Activated CD8-positive, alpha-beta T cell treated with anti-CD3 and anti-CD28 coated beads, Interleukin-2, amount 10 ng/mL, durations not matched to agents 7 days and 5 days (primary cell): ENCODE measurements at regions of chr2 and their contacts with region 1.

Region 1: DNA sequence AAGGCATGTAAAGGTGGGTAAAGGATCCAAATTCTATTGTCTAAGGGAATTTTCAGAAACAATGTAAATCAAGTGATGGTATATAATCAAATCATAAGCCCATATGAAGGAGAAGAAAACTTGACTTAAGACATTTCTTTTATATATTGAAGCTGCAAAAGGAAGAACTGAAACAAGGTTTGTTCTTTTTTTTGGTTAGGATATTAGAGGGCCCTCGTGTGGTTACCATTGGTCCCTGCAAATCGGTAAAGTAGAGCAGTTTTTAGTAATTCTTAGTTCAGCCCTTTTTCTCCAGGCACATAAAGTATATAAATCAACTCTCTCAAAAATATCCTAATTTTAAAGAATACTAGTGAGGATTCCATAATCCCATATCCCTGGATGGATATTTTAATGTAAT is 105.6 kb upstream of the STK17B start:
- DNase-seq: peak; percentile 61
- ATAC-seq: no peak
- H3K4me3 Mint-ChIP-seq: peak overlapping the region; percentile 31
- H3K27ac Mint-ChIP-seq: peak overlapping the region; percentile 89
- H3K4me1 Mint-ChIP-seq: peaks cover 48% of the 10 kb centered on the region
- H3K27me3 Mint-ChIP-seq: no peaks in the 10 kb centered on the region

Region 2: GRCh38 chr2:196143730-196144131 is 133.3 kb before region 1 on chr2:
- CTCF ChIA-PET with region 1: interaction called, 10 read pairs
- POLR2A ChIA-PET with region 1: interaction called, 4 read pairs
- DNase-seq: no peak
- ATAC-seq: peak; percentile 17
- H3K4me3 Mint-ChIP-seq: peak overlapping the region; percentile 28
- H3K27ac Mint-ChIP-seq: peak overlapping the region; percentile 72
- H3K4me1 Mint-ChIP-seq: peaks cover 74% of the 10 kb centered on the region
- H3K27me3 Mint-ChIP-seq: no peaks in the 10 kb centered on the region

Region 3: DNA sequence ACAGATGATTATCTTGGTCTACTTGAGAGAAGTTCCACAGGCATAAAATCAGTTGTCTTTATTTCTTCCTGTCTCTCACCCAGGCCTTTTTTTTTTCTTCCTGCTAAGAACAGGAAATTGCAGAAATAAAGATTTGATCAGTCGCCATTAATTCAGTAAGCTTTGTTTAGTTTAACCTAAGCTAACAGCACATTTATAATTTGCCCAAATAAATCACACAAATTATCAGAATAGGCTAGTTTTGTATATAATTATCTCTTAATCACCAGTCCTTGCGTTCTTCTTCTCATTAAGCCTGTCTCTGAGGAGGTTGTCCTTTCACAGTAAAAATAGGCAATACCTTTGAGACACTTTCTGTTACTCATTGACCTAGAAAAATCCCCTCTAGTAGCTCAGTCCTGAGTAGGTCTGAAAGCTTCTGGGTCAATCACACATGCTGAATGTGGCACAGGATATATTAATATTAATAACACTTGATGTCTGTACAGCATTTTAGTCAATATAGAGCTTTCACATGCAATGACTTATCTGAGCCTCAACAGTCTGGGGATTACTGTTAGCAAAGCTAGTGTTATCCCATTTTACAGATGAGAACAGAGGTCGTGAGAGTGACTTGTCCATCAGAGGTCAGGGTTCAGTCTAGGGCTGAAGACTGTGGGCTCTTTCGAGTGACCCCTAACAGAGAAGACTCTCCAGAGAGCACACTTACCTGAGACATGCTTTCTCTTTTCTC is 94.4 kb before region 1 on chr2:
- CTCF ChIA-PET with region 1: interaction called, 40 read pairs
- POLR2A ChIA-PET with region 1: interaction called, 3 read pairs
- DNase-seq: no peak
- ATAC-seq: peak; percentile 13
- H3K4me3 Mint-ChIP-seq: peak overlapping the region; percentile 62
- H3K27ac Mint-ChIP-seq: peak overlapping the region; percentile 95
- H3K4me1 Mint-ChIP-seq: peaks cover 89% of the 10 kb centered on the region
- H3K27me3 Mint-ChIP-seq: no peaks in the 10 kb centered on the region

Region 4: GRCh38 chr2:196225213-196225612 is 51.8 kb before region 1 on chr2:
- CTCF ChIA-PET with region 1: interaction called, 21 read pairs
- POLR2A ChIA-PET with region 1: interaction called, 5 read pairs
- DNase-seq: no peak
- ATAC-seq: no peak
- H3K4me3 Mint-ChIP-seq: peak overlapping the region; percentile 12
- H3K27ac Mint-ChIP-seq: peak overlapping the region; percentile 27
- H3K4me1 Mint-ChIP-seq: peaks cover 80% of the 10 kb centered on the region
- H3K27me3 Mint-ChIP-seq: no peaks in the 10 kb centered on the region

Region 5: DNA sequence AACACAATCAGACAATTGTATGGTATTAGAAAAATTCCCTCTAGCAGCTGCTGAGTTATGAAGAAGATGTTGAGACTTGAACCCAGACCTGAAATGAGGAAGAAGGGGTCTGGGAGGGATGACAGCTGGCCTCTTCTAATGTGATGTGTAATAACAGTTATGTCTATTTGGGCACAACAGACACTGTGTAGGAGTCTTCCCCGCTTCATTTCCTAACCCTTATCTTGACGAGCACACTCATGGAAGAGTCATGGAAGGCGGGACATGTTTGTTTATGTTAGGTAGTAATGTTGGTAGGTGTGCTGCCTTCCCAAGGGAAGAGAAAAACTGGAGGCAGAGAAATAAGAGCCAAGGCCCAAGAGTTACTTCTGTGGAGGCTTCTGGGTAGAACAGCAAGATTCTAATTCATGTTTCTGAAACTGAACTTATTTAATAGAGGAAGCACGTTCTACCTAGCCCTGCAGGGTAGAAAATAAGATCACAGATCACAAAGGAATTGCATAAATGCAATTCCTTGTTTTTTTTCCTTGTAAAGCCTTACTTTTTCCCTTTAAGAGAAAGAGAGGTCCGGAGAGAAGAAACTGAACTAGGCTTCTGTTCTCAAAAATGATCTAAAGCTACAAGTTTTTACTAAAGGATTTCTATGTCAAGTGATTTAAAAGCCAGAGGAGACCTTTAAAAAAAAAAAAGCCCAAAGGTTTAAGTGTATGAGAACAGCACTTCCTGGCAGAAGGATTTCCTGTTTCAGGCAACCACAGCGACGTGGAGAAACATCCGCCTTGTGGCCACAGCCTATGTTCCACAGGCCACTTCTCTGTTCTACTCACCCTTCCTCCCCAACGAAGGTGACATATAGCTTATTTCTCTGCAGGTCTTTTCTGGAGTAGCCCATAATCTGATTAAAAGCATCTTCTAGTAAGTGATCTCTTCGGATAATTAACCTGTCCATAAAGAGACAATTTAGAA is 37.1 kb before region 1 on chr2:
- CTCF ChIA-PET with region 1: interaction called, 45 read pairs
- POLR2A ChIA-PET with region 1: interaction called, 25 read pairs
- DNase-seq: peak; percentile 94
- ATAC-seq: peak; percentile 75
- H3K4me3 Mint-ChIP-seq: peak overlapping the region; percentile 58
- H3K27ac Mint-ChIP-seq: peak overlapping the region; percentile 99
- H3K4me1 Mint-ChIP-seq: peaks cover 86% of the 10 kb centered on the region
- H3K27me3 Mint-ChIP-seq: no peaks in the 10 kb centered on the region

Region 6: GRCh38 chr2:196263181-196263747 is 13.7 kb before region 1 on chr2:
- CTCF ChIA-PET with region 1: interaction called, 45 read pairs
- POLR2A ChIA-PET with region 1: interaction called, 25 read pairs
- DNase-seq: peak; percentile 74
- ATAC-seq: peak; percentile 73
- H3K4me3 Mint-ChIP-seq: peak overlapping the region; percentile 79
- H3K27ac Mint-ChIP-seq: peak overlapping the region; percentile 92
- H3K4me1 Mint-ChIP-seq: peaks cover 84% of the 10 kb centered on the region
- H3K27me3 Mint-ChIP-seq: no peaks in the 10 kb centered on the region

Region 7: GRCh38 chr2:196309691-196310090 is 32.7 kb after region 1 on chr2:
- CTCF ChIA-PET with region 1: no interaction called
- POLR2A ChIA-PET with region 1: no interaction called
- DNase-seq: no peak
- ATAC-seq: no peak
- H3K4me3 Mint-ChIP-seq: no peak overlapping the region
- H3K27ac Mint-ChIP-seq: no peak overlapping the region
- H3K4me1 Mint-ChIP-seq: peaks cover 6% of the 10 kb centered on the region
- H3K27me3 Mint-ChIP-seq: peaks cover 4% of the 10 kb centered on the region

Region 8: GRCh38 chr2:196354186-196354585 is 77.2 kb after region 1 on chr2:
- CTCF ChIA-PET with region 1: no interaction called
- POLR2A ChIA-PET with region 1: no interaction called
- DNase-seq: no peak
- ATAC-seq: no peak
- H3K4me3 Mint-ChIP-seq: no peak overlapping the region
- H3K27ac Mint-ChIP-seq: no peak overlapping the region
- H3K4me1 Mint-ChIP-seq: no peaks in the 10 kb centered on the region
- H3K27me3 Mint-ChIP-seq: peaks cover 4% of the 10 kb centered on the region